Cardiac septum (tissue), 1 donor: ENCODE measurements at regions of chr21 and their contacts with region 1.

Region 1: GRCh38 chr21:28754127-28754611 is 238.5 kb downstream of the LTN1 start:
- DNase-seq: peak; percentile 83

Region 2: DNA sequence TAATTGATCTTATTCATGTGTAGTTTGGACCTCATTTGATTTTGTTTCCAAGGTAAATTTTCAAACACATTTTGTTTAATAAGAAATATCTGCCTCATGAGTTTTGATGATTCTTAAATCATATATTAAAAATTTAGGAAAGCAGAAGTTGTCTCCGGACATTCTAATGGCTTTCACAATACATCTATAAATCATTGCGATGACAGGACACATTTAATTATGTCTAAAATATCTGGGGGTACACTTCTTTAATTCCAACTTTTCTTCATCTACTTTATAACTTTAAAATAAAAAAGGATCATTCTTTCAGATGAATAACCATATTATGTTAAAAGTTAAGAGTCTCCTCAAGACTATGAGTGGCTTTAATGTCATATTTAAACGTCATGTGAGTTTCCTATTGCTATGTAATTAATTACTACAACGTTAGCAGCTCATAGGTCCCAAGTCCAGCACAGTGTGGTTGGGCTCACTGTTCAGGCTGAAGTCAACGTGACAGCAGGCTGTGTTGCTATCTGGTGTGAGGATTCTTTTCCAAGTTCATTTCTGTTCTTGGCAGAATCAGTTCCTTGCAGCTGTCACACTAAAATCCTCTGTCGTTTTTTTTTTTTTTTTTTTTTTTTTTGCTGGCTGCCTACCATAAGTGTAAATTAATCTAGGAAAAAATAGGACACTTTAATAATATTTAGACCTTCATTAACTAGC is 655.0 kb before region 1 on chr21:
- intact Hi-C with region 1: no loop called
- DNase-seq: no peak

Region 3: DNA sequence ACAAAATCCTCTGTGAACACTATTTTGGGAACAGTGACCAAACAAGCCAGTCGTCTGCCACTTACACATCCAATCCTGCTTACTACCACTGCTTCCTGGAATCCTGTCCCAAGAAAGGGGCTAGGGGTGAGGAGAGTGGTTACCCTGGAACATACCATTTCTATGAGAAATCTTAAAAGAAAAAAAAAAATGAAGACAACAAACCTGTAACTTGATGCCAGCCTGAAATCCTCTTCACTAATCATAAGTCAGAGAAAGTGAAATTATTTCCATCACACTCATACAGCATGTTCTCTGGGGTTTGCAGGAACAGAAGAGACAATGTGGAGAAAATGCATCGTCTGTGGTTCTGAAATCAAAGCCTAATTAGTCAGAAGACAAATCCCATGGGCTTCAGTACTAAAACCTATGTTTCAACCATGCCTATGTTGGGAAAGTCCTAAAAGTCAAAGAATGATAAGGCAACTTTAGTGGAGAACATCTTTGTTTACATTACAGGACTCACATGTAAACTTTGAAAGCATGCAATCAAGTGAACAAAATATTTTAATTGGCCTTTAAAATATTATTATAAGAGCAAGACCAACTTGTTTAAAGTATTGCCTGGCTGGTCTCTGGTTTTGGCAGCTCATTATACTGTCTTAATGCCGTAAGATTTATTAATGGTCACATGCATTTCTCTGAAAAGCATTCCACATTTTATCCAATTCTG is 17.8 kb after region 1 on chr21:
- intact Hi-C with region 1: loop called (anchors 1 kb)
- DNase-seq: no peak

Region 4: DNA sequence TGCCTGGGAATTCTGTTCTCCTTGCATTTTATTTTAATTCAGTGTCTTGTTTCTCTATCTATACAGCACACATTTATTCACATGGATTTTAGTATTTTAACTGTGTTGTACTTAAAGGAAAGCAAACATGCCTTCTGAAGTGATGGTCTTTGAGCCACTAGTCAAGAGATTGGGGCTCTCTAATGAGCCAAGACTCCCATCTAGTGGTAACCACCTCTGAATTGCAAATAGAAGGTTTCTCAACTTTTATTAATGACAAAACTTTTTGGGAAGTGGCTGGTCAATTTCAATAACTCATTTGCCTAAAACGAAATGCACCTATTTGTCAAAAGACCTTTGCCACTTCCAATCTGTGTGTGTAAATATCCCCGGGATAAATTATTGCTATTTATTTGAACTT is 38.9 kb after region 1 on chr21:
- intact Hi-C with region 1: loop called (anchors 5 kb)
- DNase-seq: no peak